ENCODE measurements at regions of chr4 and their contacts with region 1.

Region 1: GRCh38 chr4:157739237-157739636 is 433.6 kb downstream of the GASK1B start:
- DNase-seq: no peak
- H3K4me3 ChIP-seq: no peak overlapping the region
- H3K27ac ChIP-seq: no peak overlapping the region
- H3K4me1 ChIP-seq: no peaks in the 10 kb centered on the region
- H3K27me3 ChIP-seq: no peaks in the 10 kb centered on the region
- CTCF ChIP-seq: no peak
- EP300 ChIP-seq: no peak
- POLR2A ChIP-seq: no peak

Region 2: GRCh38 chr4:158353541-158354304 is 614.5 kb after region 1 on chr4:
- in situ Hi-C with region 1: no loop called
- intact Hi-C with region 1: loop called (anchors 5 kb)
- DNase-seq: no peak
- H3K4me3 ChIP-seq: no peak overlapping the region
- H3K27ac ChIP-seq: no peak overlapping the region
- H3K4me1 ChIP-seq: no peaks in the 10 kb centered on the region
- H3K27me3 ChIP-seq: no peaks in the 10 kb centered on the region
- CTCF ChIP-seq: no peak
- EP300 ChIP-seq: no peak
- POLR2A ChIP-seq: no peak

Region 3: GRCh38 chr4:158428242-158428641 is 689.0 kb after region 1 on chr4:
- in situ Hi-C with region 1: no loop called
- intact Hi-C with region 1: loop called (anchors 5 kb)
- DNase-seq: no peak
- H3K4me3 ChIP-seq: no peak overlapping the region
- H3K27ac ChIP-seq: no peak overlapping the region
- H3K4me1 ChIP-seq: no peaks in the 10 kb centered on the region
- H3K27me3 ChIP-seq: no peaks in the 10 kb centered on the region
- CTCF ChIP-seq: no peak
- EP300 ChIP-seq: no peak
- POLR2A ChIP-seq: no peak

Measured in transverse colon (tissue), 4 donors.